Body of pancreas (tissue), 4 donors: ENCODE measurements at regions of chr5 and their contacts with region 1.

Region 1: GRCh38 chr5:157312492-157312891 is 46.6 kb downstream of the CYFIP2 start:
- DNase-seq: peak; percentile 22 to 50 (median 38)
- ATAC-seq: peak; percentile 55
- H3K4me3 ChIP-seq: no peak overlapping the region
- H3K27ac ChIP-seq: no peak overlapping the region
- H3K4me1 ChIP-seq: no peaks in the 10 kb centered on the region
- H3K27me3 ChIP-seq: no peaks in the 10 kb centered on the region
- CTCF ChIP-seq: peak in 6 of 7 experiments; percentile 37 to 60 (median 51)
- POLR2A ChIP-seq: no peak

Region 2: DNA sequence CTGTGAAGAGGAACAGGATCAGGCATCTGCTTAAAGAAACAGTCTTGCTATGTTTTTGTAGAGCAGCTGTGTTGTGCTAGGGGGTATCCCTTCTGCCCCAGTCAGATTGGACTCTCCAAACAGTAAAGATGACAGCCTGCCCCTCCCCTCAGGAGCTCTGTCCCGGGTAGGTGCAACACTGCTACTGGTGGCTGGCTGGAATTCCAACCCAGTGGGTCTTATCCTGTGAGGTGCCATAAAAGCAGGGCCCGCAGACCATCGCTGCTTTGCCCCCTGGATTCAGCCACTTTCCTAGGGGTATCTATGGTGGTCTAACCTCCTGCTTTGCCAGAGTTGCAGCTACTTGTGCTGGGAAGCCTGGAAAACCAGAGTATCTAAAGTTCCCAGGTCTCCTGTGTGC is 577.0 kb before region 1 on chr5:
- intact Hi-C with region 1: no loop called
- DNase-seq: no peak
- ATAC-seq: no peak
- H3K4me3 ChIP-seq: no peak overlapping the region
- H3K27ac ChIP-seq: no peak overlapping the region
- H3K4me1 ChIP-seq: no peaks in the 10 kb centered on the region
- H3K27me3 ChIP-seq: no peaks in the 10 kb centered on the region
- CTCF ChIP-seq: no peak
- POLR2A ChIP-seq: no peak

Region 3: DNA sequence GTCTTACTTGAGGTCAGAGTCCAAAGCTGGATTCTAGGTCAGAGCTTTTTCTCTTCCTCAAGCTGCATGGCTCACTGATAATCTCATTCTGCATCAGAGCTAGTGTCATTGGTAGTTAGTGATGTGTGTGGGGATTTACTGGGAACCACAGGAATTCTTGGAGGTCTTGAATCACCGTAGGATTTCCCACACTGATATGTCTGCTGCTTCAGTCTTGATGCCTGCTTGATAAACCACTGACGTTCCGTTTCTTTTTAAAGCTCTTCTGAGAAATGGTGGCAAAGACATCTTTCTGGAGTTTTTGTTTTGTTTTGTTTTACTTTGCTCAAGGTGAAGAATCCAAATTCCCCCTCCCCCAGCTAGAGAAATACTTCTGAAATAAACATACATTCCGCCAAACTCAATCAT is 145.3 kb before region 1 on chr5:
- intact Hi-C with region 1: no loop called
- DNase-seq: no peak
- ATAC-seq: no peak
- H3K4me3 ChIP-seq: no peak overlapping the region
- H3K27ac ChIP-seq: no peak overlapping the region
- H3K4me1 ChIP-seq: no peaks in the 10 kb centered on the region
- H3K27me3 ChIP-seq: no peaks in the 10 kb centered on the region
- CTCF ChIP-seq: no peak
- POLR2A ChIP-seq: no peak

Region 4: GRCh38 chr5:157253547-157253946 is 58.9 kb before region 1 on chr5:
- intact Hi-C with region 1: loop called (anchors 10 kb)
- DNase-seq: peak; percentile 44 to 60 (median 52)
- ATAC-seq: peak; percentile 85
- H3K4me3 ChIP-seq: no peak overlapping the region
- H3K27ac ChIP-seq: no peak overlapping the region
- H3K4me1 ChIP-seq: no peaks in the 10 kb centered on the region
- H3K27me3 ChIP-seq: no peaks in the 10 kb centered on the region
- CTCF ChIP-seq: peak; percentile 62 to 86 (median 79)
- POLR2A ChIP-seq: no peak